Activated CD8-positive, alpha-beta T cell treated with anti-CD3 and anti-CD28 coated beads, Interleukin-2, amount 10 ng/mL, durations not matched to agents 7 days and 5 days (primary cell): ENCODE measurements at regions of chr1 and their contacts with region 1.

Region 1: GRCh38 chr1:161486806-161487741 is 18.2 kb upstream of the FCGR2A start:
- DNase-seq: peak; percentile 66
- ATAC-seq: peak; percentile 73
- H3K4me3 Mint-ChIP-seq: no peak overlapping the region
- H3K27ac Mint-ChIP-seq: no peak overlapping the region
- H3K4me1 Mint-ChIP-seq: peaks cover 24% of the 10 kb centered on the region
- H3K27me3 Mint-ChIP-seq: peaks cover 38% of the 10 kb centered on the region

Region 2: GRCh38 chr1:161177112-161177935 is 309.8 kb before region 1 on chr1 and contains the start of gene B4GALT3:
- CTCF ChIA-PET with region 1: no interaction called
- POLR2A ChIA-PET with region 1: no interaction called
- DNase-seq: peak; percentile 94
- ATAC-seq: peak; percentile 91
- H3K4me3 Mint-ChIP-seq: peak within 1 kb of the TSS; percentile 90
- H3K27ac Mint-ChIP-seq: peak within 1 kb of the TSS; percentile 94
- H3K4me1 Mint-ChIP-seq: peaks cover 56% of the 10 kb centered on the region
- H3K27me3 Mint-ChIP-seq: no peaks in the 10 kb centered on the region
- total RNA-seq, gene B4GALT3: 34.2 to 37.0 TPM

Region 3: GRCh38 chr1:161506336-161507223 is 19.5 kb after region 1 on chr1:
- CTCF ChIA-PET with region 1: interaction called, 16 read pairs
- POLR2A ChIA-PET with region 1: no interaction called
- DNase-seq: no peak
- ATAC-seq: no peak
- H3K4me3 Mint-ChIP-seq: no peak overlapping the region
- H3K27ac Mint-ChIP-seq: no peak overlapping the region
- H3K4me1 Mint-ChIP-seq: peaks cover 29% of the 10 kb centered on the region
- H3K27me3 Mint-ChIP-seq: peaks cover 19% of the 10 kb centered on the region